Heart right ventricle (tissue), 16 donors: ENCODE measurements at regions of chr2 and their contacts with region 1.

Region 1: GRCh38 chr2:219177552-219178376 is at the start of gene RETREG2:
- DNase-seq: peak; percentile 86 to 89
- ATAC-seq: peak; percentile 77 to 93 (median 84)
- H3K4me3 ChIP-seq: peak within 1 kb of the TSS; percentile 42 to 97 (median 92)
- H3K27ac ChIP-seq: peak within 1 kb of the TSS; percentile 89 to 100 (median 99)
- H3K4me1 ChIP-seq: peaks cover 11 to 58% (median 37%) of the 10 kb centered on the region in 9 donors
- H3K27me3 ChIP-seq: no peaks in the 10 kb centered on the region
- CTCF ChIP-seq: peak in 6 of 9 donors; percentile 25 to 70 (median 38)
- total RNA-seq, gene RETREG2: 24.1 to 47.3 (median 30.6) TPM

Region 2: GRCh38 chr2:219206442-219207253 is 28.9 kb after region 1 on chr2 and contains the start of gene ZFAND2B:
- intact Hi-C with region 1: loop called in 6 of 10 experiments (anchors 1 to 5 kb)
- DNase-seq: peak; percentile 94 to 96
- ATAC-seq: peak; percentile 97 to 99 (median 98)
- H3K4me3 ChIP-seq: peak within 1 kb of the TSS; percentile 33 to 82 (median 70)
- H3K27ac ChIP-seq: peak within 1 kb of the TSS; percentile 80 to 99 (median 95)
- H3K4me1 ChIP-seq: peaks cover 8 to 31% (median 20%) of the 10 kb centered on the region in 9 donors
- H3K27me3 ChIP-seq: no peaks in the 10 kb centered on the region
- CTCF ChIP-seq: peak in 1 of 9 donors; percentile 7
- total RNA-seq, gene ZFAND2B: 11.5 to 19.2 (median 16.4) TPM

Region 3: DNA sequence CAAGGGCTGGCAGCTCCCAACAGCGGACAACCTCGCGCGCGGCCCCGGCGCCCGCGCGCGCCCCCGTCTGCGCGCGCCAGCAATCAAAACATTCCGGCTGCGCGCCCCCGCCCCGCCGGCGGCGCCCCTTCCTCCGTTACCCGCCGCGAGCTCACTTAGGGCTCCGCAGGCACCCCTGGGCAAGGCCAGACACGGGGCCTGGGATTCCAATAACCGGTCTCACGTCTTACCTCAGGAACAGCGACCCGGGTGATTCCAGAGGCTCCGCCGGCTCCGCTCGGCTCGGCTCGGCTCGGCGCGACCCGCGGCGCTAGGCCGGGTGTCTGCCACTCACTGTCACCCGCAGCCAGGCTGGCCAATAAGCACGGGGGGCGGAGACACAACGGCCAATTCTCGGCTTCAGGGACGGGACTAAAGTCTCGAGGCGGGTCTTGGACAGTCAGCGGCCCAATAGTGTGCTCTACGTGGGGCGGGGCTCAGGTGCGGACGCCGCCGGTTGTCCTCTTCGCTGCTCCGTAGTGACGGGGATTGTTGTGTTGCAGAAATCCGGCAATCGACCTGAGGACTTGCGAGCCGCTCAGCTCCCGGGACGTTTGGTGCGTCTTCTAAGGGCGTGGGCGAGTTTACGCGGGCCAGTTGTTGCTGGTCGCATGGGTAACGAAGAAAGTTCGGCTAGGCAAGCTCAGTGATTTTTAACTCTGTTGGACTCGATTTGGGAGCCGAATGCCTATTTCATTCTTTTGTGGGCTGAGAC is 51.7 kb after region 1 on chr2 and contains the starts of genes ANKZF1 and ATG9A:
- intact Hi-C with region 1: loop called in 1 of 10 experiments (anchors 1 kb)
- DNase-seq: peak; percentile 98 to 99
- ATAC-seq: peak; percentile 98 to 99 (median 99)
- H3K4me3 ChIP-seq: peak within 1 kb of the TSS; percentile 73 to 91 (median 82)
- H3K27ac ChIP-seq: peak within 1 kb of the TSS; percentile 89 to 99 (median 96)
- H3K4me1 ChIP-seq: peaks cover 15 to 49% (median 32%) of the 10 kb centered on the region in 9 donors
- H3K27me3 ChIP-seq: no peaks in the 10 kb centered on the region
- CTCF ChIP-seq: no peak
- total RNA-seq, gene ANKZF1: 16.4 to 36.8 (median 25.5) TPM
- total RNA-seq, gene ATG9A: 64.5 to 103 (median 76.4) TPM

Region 4: GRCh38 chr2:219294356-219295351 is 116.9 kb after region 1 on chr2:
- intact Hi-C with region 1: loop called in 3 of 10 experiments (anchors 5 kb)
- DNase-seq: peak; percentile 81 to 90
- ATAC-seq: peak; percentile 86 to 92 (median 89)
- H3K4me3 ChIP-seq: peak overlapping the region; percentile 43 to 67 (median 62)
- H3K27ac ChIP-seq: peak overlapping the region; percentile 8 to 90 (median 82)
- H3K4me1 ChIP-seq: peaks cover 3 to 24% (median 12%) of the 10 kb centered on the region in 9 donors
- H3K27me3 ChIP-seq: peaks cover 0 to 13% (median 8%) of the 10 kb centered on the region in 7 donors
- CTCF ChIP-seq: peak; percentile 99 to 100 (median 99)

Region 5: DNA sequence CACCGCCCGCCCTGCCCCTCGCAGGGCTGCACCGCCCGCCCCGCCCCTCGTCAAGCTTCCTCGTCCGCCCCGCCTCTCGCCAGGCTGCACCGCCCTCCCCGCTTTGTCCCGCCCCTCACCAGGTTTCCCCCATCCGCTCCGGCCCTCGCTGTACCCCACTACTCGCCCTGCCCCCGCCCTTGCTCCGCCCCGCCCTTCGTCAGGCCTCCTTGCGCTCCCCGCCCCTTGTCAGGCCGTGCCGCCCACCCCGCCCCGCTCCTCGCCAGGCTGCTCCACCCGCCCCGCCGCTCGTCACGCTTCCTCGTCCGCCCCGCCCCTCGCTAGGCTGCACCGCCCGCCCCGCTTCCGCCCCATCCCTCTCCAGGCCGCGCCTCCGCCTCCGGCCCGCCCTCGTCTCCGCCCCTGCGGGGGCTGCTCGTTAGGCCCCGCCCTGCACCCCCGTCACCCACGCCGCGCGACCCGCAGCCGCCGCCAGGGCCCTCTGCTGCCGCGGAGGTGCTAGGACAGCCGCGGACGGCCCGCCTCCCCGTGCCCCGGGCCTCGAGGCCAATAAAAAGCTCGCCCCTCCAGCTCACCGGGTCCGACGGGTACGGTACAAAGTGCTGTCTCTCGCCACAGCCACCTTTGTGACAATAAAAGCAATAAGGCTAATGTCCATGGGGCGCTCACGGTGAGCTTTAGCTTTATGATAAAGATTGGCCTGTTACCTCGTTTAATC is 210.5 kb after region 1 on chr2:
- intact Hi-C with region 1: loop called in 4 of 10 experiments (anchors 5 to 10 kb)
- DNase-seq: peak; percentile 99 to 100
- ATAC-seq: peak; percentile 87 to 91 (median 88)
- H3K4me3 ChIP-seq: peak overlapping the region in 9 of 10 donors; percentile 1 to 99 (median 90)
- H3K27ac ChIP-seq: peak overlapping the region; percentile 65 to 97 (median 96)
- H3K4me1 ChIP-seq: peaks cover 5 to 29% (median 13%) of the 10 kb centered on the region in 9 donors
- H3K27me3 ChIP-seq: no peaks in the 10 kb centered on the region
- CTCF ChIP-seq: peak; percentile 46 to 83 (median 72)

Region 6: GRCh38 chr2:219433666-219434467 is 256.1 kb after region 1 on chr2:
- intact Hi-C with region 1: no loop called
- DNase-seq: no peak
- ATAC-seq: peak in 7 of 8 donors; percentile 9 to 48 (median 33)
- H3K4me3 ChIP-seq: peak overlapping the region in 9 of 10 donors; percentile 33 to 59 (median 53)
- H3K27ac ChIP-seq: peak overlapping the region; percentile 84 to 99 (median 92)
- H3K4me1 ChIP-seq: peaks cover 3 to 52% (median 8%) of the 10 kb centered on the region in 9 donors
- H3K27me3 ChIP-seq: peaks cover 0 to 47% (median 25%) of the 10 kb centered on the region in 7 donors
- CTCF ChIP-seq: peak in 7 of 9 donors; percentile 15 to 55 (median 45)